Activated B cell treated with CpG ODN at 0.5 μM for 24 hours (primary cell): ENCODE measurements at regions of chr12 and their contacts with region 1.

Region 1: GRCh38 chr12:76144245-76144549 is 59.7 kb upstream of the NAP1L1 start:
- DNase-seq: no peak
- ATAC-seq: no peak
- H3K4me3 Mint-ChIP-seq: no peak overlapping the region
- H3K27ac Mint-ChIP-seq: no peak overlapping the region
- H3K4me1 Mint-ChIP-seq: peaks cover 15% of the 10 kb centered on the region
- H3K27me3 Mint-ChIP-seq: no peaks in the 10 kb centered on the region
- CTCF ChIP-seq: no peak

Region 2: DNA sequence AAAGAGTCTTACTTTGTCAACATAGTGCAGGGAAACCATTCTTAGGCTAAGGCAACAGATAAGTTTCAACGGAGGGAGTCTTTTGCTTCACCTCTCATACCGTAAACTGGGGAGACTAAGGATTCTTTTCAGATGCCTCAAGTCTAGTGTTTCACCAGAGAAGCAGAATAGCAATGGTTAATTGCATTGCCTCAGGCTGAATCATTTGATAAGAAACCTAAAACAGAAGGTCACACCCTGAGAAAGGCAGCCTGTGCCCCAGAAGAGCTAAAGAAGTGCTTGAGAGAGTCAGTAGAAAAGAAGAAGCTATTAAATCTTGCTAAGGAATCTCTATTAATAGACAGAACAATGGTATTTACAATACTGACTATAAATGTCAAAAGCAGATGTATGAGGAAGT is 1628.3 kb before region 1 on chr12:
- CTCF ChIA-PET with region 1: no interaction called
- POLR2A ChIA-PET with region 1: interaction called, 11 read pairs
- intact Hi-C with region 1: no loop called
- DNase-seq: no peak
- ATAC-seq: no peak
- H3K4me3 Mint-ChIP-seq: no peak overlapping the region
- H3K27ac Mint-ChIP-seq: no peak overlapping the region
- H3K4me1 Mint-ChIP-seq: no peaks in the 10 kb centered on the region
- H3K27me3 Mint-ChIP-seq: peaks cover 6% of the 10 kb centered on the region
- CTCF ChIP-seq: no peak